Cardiac septum (tissue), 1 donor: ENCODE measurements at regions of chr6 and their contacts with region 1.

Region 1: GRCh38 chr6:32838114-32838958 is at the start of gene TAP2:
- DNase-seq: peak; percentile 99
- total RNA-seq, gene TAP2: 12.7 TPM

Region 2: GRCh38 chr6:32785781-32786533 is 52.4 kb before region 1 on chr6:
- intact Hi-C with region 1: no loop called
- DNase-seq: no peak

Region 3: GRCh38 chr6:32853541-32854375 is 15.4 kb after region 1 on chr6 and contains the starts of genes PSMB9 and TAP1:
- intact Hi-C with region 1: loop called (anchors 1 kb)
- DNase-seq: peak; percentile 99
- total RNA-seq, gene PSMB9: 14.2 TPM
- total RNA-seq, gene TAP1: 18.1 TPM

Region 4: DNA sequence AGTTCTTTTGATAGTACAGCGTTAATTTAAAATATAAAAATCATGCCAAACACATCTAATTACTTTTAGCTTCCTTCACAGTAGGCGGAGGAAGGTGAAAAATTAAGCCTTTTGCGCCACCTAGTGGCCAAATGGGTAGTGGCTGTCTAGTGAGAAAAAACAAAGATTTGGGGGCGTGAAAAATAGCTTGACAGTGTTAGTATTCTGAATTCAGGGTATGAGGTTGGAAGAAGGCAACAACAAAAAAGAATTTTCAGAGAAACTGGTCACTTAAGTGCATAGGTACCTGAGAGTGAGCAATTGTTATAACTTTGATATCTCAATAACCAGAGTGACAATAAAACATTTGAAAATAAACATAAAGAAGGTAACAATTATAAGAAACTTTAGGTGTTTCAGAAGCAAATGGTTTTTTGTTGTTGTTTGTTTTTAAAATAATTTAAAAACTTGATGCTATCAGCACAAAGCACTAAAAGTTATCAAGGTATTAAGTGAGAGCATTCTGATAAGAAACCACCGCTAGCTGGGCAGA is 30.0 kb after region 1 on chr6:
- intact Hi-C with region 1: loop called (anchors 1 kb)
- DNase-seq: no peak